ENCODE measurements at regions of chr22 and their contacts with region 1.

Region 1: GRCh38 chr22:39097098-39098020 is at the start of gene APOBEC3H:
- DNase-seq: no peak
- ATAC-seq: peak; percentile 48
- H3K4me3 ChIP-seq: peak within 1 kb of the TSS; percentile 60
- H3K27ac ChIP-seq: peak within 1 kb of the TSS; percentile 98
- H3K4me1 ChIP-seq: peaks cover 60% of the 10 kb centered on the region
- H3K27me3 ChIP-seq: no peaks in the 10 kb centered on the region
- CTCF ChIP-seq: no peak
- EP300 ChIP-seq: no peak
- POLR2A ChIP-seq: peak; percentile 52; the same call in 1 of the 2 replicates
- RAD21 ChIP-seq: no peak
- polyA plus RNA-seq, gene APOBEC3H: 20.3 to 23.0 TPM

Region 2: DNA sequence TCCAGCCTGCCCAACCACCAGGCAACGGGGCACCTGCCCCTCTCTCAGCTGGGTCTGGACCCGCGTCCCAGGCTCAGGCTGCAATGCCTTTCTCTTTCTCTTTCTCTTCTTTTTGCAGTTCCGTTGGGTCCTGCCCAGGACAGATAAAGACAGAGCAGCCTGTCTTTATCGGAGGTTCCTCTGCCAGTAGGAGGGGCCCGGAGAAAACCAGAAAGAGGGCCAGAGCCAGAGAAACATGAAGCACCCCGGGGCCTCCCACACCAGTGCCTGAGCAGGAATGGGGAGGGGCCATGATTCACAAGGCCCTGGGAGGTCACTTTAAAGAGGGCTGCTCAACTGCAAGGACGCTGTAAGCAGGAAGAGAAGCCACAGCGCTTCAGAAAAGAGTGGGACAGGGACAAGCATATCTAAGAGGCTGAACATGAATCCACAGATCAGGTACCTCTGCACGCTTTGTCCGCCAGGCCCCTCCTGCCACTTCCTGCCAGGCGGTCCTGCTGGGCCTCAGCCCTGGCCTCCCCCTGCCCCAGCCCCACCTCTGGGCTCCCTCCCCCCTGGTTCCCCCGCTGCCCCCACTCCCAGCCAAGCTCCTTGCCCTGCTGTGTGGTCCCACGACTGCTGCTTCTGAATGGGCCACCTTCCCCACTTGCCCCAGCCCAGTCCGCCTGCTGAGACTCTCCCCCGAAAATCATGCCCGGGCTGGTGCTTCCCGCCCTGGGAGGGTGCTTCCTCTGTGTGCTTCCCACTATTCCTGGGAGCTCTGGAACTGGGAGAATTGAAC is 83.2 kb before region 1 on chr22 and contains the start of gene APOBEC3C:
- CTCF ChIA-PET with region 1: interaction called, 5 read pairs
- POLR2A ChIA-PET with region 1: interaction called, 6 read pairs
- RAD21 ChIA-PET with region 1: interaction called, 11 read pairs
- SMC1A ChIA-PET with region 1: interaction called, 7 read pairs
- in situ Hi-C with region 1: no loop called
- intact Hi-C with region 1: no loop called
- DNase-seq: peak; percentile 79
- ATAC-seq: peak; percentile 97
- H3K4me3 ChIP-seq: peak within 1 kb of the TSS; percentile 98
- H3K27ac ChIP-seq: peak within 1 kb of the TSS; percentile 94
- H3K4me1 ChIP-seq: peaks cover 6% of the 10 kb centered on the region
- H3K27me3 ChIP-seq: no peaks in the 10 kb centered on the region
- CTCF ChIP-seq: peak; percentile 7 to 46 (median 15); a peak in 3 of 6 replicates
- EP300 ChIP-seq: no peak
- POLR2A ChIP-seq: peak; percentile 79
- RAD21 ChIP-seq: peak; percentile 43
- polyA plus RNA-seq, gene APOBEC3C: 258 to 290 TPM

Region 3: DNA sequence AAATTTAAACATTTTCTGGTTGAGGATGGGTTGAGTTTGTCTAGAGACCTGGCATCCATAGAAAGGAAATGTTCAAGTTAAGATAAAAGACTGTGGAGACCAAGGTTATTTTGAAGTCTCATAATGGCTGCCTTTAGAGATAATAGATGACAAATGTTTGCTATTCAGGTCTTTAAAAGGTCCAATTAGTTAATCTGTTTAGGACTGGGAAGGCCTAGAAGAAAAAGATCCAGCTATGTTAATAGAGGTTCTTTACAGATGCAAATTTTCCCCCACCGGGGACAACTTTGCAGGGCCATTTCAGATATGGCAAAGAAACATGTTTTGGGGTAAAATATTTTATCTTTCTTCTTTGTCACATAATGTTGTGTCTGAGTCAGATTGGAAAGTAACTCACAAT is 23.4 kb before region 1 on chr22:
- CTCF ChIA-PET with region 1: interaction called, 4 read pairs
- POLR2A ChIA-PET with region 1: interaction called, 49 read pairs
- RAD21 ChIA-PET with region 1: interaction called, 57 read pairs
- SMC1A ChIA-PET with region 1: interaction called, 44 read pairs
- in situ Hi-C with region 1: no loop called
- intact Hi-C with region 1: no loop called
- DNase-seq: no peak
- ATAC-seq: no peak
- H3K4me3 ChIP-seq: no peak overlapping the region
- H3K27ac ChIP-seq: peak overlapping the region; percentile 76
- H3K4me1 ChIP-seq: peaks cover 40% of the 10 kb centered on the region
- H3K27me3 ChIP-seq: no peaks in the 10 kb centered on the region
- CTCF ChIP-seq: no peak
- EP300 ChIP-seq: no peak
- POLR2A ChIP-seq: no peak
- RAD21 ChIP-seq: no peak

Region 4: GRCh38 chr22:39110631-39111561 is 13.5 kb after region 1 on chr22:
- CTCF ChIA-PET with region 1: interaction called, 39 read pairs
- POLR2A ChIA-PET with region 1: interaction called, 76 read pairs
- RAD21 ChIA-PET with region 1: interaction called, 85 read pairs
- SMC1A ChIA-PET with region 1: interaction called, 126 read pairs
- in situ Hi-C with region 1: no loop called
- intact Hi-C with region 1: loop called (anchors 1 kb)
- DNase-seq: no peak
- ATAC-seq: no peak; the same call in 2 of the 3 replicates
- H3K4me3 ChIP-seq: no peak overlapping the region
- H3K27ac ChIP-seq: no peak overlapping the region
- H3K4me1 ChIP-seq: peaks cover 27% of the 10 kb centered on the region
- H3K27me3 ChIP-seq: no peaks in the 10 kb centered on the region
- CTCF ChIP-seq: no peak
- EP300 ChIP-seq: no peak
- POLR2A ChIP-seq: no peak
- RAD21 ChIP-seq: no peak

Region 5: GRCh38 chr22:39152511-39153219 is 55.3 kb after region 1 on chr22 and contains the start of gene CBX7:
- CTCF ChIA-PET with region 1: no interaction called
- POLR2A ChIA-PET with region 1: interaction called, 22 read pairs
- RAD21 ChIA-PET with region 1: interaction called, 32 read pairs
- SMC1A ChIA-PET with region 1: interaction called, 9 read pairs
- in situ Hi-C with region 1: no loop called
- intact Hi-C with region 1: no loop called
- DNase-seq: peak; percentile 46
- ATAC-seq: peak; percentile 79
- H3K4me3 ChIP-seq: peak within 1 kb of the TSS; percentile 80
- H3K27ac ChIP-seq: peak within 1 kb of the TSS; percentile 73
- H3K4me1 ChIP-seq: peaks cover 41% of the 10 kb centered on the region
- H3K27me3 ChIP-seq: peaks cover 3 to 12% of the 10 kb centered on the region in 2 experiments
- CTCF ChIP-seq: no peak
- EP300 ChIP-seq: no peak
- POLR2A ChIP-seq: peak; percentile 73
- RAD21 ChIP-seq: no peak
- polyA plus RNA-seq, gene CBX7: 0.18 to 0.64 TPM